Endothelial cell of umbilical vein (primary cell): ENCODE measurements at regions of chr1 and their contacts with region 1.

Region 1: DNA sequence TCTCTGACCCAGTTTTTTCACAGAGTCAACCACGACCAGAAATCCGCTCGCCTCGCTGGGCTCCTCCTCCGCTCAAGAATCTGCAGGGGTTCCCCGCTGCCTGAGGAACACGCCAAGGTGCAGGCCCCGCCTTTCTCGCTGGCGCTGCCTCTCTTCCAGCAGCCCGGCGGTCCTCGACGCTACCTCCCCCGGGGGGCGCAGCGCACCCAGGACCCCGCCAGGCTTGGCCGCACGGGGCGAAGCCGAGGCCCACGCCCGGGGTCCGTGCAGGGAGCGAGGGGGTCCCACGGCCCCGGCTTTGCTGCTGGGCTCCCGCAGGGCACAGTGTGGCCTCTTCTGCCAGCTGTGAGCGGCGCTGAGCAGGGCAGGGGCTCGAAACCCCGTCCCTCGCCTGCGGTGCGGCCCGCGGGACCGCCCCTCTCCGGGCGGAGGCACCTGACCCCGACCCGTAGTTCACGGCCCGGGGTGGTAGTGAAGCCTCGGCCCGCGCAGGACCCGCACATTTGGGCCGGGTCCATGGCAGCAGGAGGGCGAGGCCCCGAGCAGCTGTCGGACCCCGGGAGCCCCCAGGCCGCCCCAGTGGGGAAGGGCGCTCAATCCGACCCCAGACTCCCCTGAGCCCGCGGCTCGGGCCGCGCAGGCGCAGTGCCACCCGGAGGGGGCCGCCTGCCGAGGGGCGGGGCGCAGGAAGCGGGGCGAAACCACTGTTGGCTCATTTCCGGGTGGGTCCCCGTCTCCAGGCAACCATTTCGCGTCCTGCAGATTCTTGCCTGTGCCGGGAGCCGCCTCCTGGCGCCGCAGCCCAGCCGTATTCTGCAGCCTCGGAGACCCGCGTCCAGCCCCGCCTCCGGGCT is 10.0 kb upstream of the MMEL1 start:
- DNase-seq: peak; percentile 89
- H3K4me3 ChIP-seq: peak overlapping the region; percentile 55 to 87 (median 60)
- H3K27ac ChIP-seq: peak overlapping the region; percentile 79
- H3K4me1 ChIP-seq: peaks cover 8% of the 10 kb centered on the region
- H3K27me3 ChIP-seq: no peaks in the 10 kb centered on the region
- CTCF ChIP-seq: peak in 1 of 2 donors; percentile 21
- POLR2A ChIP-seq: peak; percentile 68

Region 2: DNA sequence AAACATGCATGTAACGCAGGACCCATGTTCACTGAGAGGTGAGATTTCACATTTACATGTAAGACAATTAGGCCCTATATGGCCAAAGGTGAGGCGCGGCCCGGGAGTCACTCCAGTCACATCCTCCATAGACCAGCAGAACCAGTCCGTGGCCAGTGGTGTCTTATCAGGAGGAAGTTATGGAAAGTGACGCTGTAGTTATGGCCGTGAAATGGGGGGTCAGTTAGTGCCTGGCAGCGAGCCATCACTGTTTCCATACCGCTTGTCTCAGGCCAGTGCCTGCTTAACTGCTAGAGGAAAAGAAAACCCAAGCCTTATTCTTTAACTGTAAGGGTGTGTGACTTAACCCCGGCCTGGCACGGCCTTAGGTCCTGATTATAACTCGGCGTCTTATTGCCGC is 1533.0 kb before region 1 on chr1:
- CTCF ChIA-PET with region 1: no interaction called
- POLR2A ChIA-PET with region 1: no interaction called
- dilution Hi-C with region 1: no loop called
- intact Hi-C with region 1: no loop called
- DNase-seq: peak; percentile 36
- H3K4me3 ChIP-seq: no peak overlapping the region
- H3K27ac ChIP-seq: no peak overlapping the region
- H3K4me1 ChIP-seq: no peaks in the 10 kb centered on the region
- H3K27me3 ChIP-seq: no peaks in the 10 kb centered on the region
- CTCF ChIP-seq: no peak
- POLR2A ChIP-seq: no peak

Region 3: GRCh38 chr1:2525920-2526823 is 116.6 kb before region 1 on chr1 and contains the start of gene PANK4:
- CTCF ChIA-PET with region 1: no interaction called
- POLR2A ChIA-PET with region 1: no interaction called
- dilution Hi-C with region 1: no loop called
- intact Hi-C with region 1: loop called (anchors 1 kb)
- DNase-seq: peak; percentile 84
- H3K4me3 ChIP-seq: peak within 1 kb of the TSS; percentile 75 to 97 (median 91)
- H3K27ac ChIP-seq: peak within 1 kb of the TSS; percentile 58
- H3K4me1 ChIP-seq: peaks cover 17% of the 10 kb centered on the region
- H3K27me3 ChIP-seq: peaks cover 10 to 17% of the 10 kb centered on the region in 2 experiments
- CTCF ChIP-seq: no peak
- POLR2A ChIP-seq: peak; percentile 82
- total RNA-seq, gene PANK4: 34.0 and 34.7 TPM in 2 replicates

Region 4: DNA sequence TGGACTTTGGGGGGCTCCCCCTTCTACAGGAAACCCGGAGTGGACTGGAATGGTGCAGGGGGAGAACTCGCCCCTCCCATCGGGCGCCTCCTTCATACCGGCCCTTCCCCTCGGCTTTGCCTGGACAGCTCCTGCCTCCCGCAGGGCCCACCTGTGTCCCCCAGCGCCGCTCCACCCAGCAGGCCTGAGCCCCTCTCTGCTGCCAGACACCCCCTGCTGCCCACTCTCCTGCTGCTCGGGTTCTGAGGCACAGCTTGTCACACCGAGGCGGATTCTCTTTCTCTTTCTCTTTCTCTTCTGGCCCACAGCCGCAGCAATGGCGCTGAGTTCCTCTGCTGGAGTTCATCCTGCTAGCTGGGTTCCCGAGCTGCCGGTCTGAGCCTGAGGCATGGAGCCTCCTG is 86.5 kb before region 1 on chr1 and contains the start of gene TNFRSF14:
- CTCF ChIA-PET with region 1: no interaction called
- POLR2A ChIA-PET with region 1: no interaction called
- dilution Hi-C with region 1: no loop called
- intact Hi-C with region 1: loop called (anchors 1 kb)
- DNase-seq: peak; percentile 65
- H3K4me3 ChIP-seq: peak within 1 kb of the TSS; percentile 15 to 38 (median 28)
- H3K27ac ChIP-seq: peak within 1 kb of the TSS; percentile 53
- H3K4me1 ChIP-seq: peaks cover 23% of the 10 kb centered on the region
- H3K27me3 ChIP-seq: no peaks in the 10 kb centered on the region
- CTCF ChIP-seq: peak in 1 of 2 donors; percentile 17
- POLR2A ChIP-seq: no peak
- total RNA-seq, gene TNFRSF14: 36.4 and 40.9 TPM in 2 replicates

Region 5: GRCh38 chr1:2580691-2581090 is 62.1 kb before region 1 on chr1:
- CTCF ChIA-PET with region 1: no interaction called
- POLR2A ChIA-PET with region 1: no interaction called
- dilution Hi-C with region 1: no loop called
- intact Hi-C with region 1: loop called (anchors 1 kb)
- DNase-seq: no peak
- H3K4me3 ChIP-seq: no peak overlapping the region
- H3K27ac ChIP-seq: peak overlapping the region; percentile 86
- H3K4me1 ChIP-seq: peaks cover 34% of the 10 kb centered on the region
- H3K27me3 ChIP-seq: no peaks in the 10 kb centered on the region
- CTCF ChIP-seq: no peak
- POLR2A ChIP-seq: no peak

Region 6: GRCh38 chr1:2586154-2587070 is 56.4 kb before region 1 on chr1 and contains the start of gene PRXL2B:
- CTCF ChIA-PET with region 1: no interaction called
- POLR2A ChIA-PET with region 1: no interaction called
- dilution Hi-C with region 1: no loop called
- intact Hi-C with region 1: loop called (anchors 1 kb)
- DNase-seq: peak; percentile 98
- H3K4me3 ChIP-seq: peak within 1 kb of the TSS; percentile 56 to 73 (median 61)
- H3K27ac ChIP-seq: peak within 1 kb of the TSS; percentile 75
- H3K4me1 ChIP-seq: peaks cover 15% of the 10 kb centered on the region
- H3K27me3 ChIP-seq: no peaks in the 10 kb centered on the region
- CTCF ChIP-seq: no peak
- POLR2A ChIP-seq: peak; percentile 33
- total RNA-seq, gene PRXL2B: 55.8 and 56.8 TPM in 2 replicates

Region 7: DNA sequence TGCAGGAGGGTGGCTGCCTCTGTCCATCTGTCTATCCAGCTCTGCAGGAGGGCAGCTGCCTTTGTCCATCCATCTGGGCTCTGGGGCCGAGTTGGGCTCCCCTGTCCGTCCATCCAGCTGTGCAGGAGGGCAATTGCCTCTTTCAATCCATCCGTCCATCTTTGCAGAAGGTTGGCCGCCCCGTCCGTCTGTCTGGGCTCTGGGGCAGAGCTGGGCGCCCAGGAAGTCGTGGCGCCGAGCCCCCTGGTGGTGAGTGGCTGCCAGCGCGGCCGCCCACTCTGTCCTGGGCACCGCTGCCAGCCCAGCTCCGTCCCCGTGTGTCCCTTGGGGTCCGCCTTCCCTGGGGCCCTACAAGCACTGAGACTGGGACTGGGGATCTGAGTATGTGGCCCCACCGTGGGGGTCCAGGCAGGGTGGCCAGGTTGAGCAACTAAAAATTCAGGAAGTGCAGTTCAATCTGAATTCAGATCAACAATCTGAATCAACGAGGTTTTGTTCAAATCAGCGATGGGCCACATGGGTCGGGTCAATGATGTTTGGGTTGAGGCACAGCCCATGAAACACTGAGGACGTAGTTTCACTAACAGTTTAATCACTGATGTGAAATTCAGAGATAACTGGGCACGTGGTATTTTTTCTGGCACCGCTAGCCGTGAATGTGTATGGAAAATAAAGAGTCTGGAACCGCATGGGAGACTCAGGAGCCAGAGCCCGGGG is 279.3 kb after region 1 on chr1:
- CTCF ChIA-PET with region 1: no interaction called
- POLR2A ChIA-PET with region 1: no interaction called
- dilution Hi-C with region 1: no loop called
- intact Hi-C with region 1: no loop called
- DNase-seq: no peak
- H3K4me3 ChIP-seq: no peak overlapping the region
- H3K27ac ChIP-seq: no peak overlapping the region
- H3K4me1 ChIP-seq: no peaks in the 10 kb centered on the region
- H3K27me3 ChIP-seq: no peaks in the 10 kb centered on the region
- CTCF ChIP-seq: no peak
- POLR2A ChIP-seq: no peak

Region 8: DNA sequence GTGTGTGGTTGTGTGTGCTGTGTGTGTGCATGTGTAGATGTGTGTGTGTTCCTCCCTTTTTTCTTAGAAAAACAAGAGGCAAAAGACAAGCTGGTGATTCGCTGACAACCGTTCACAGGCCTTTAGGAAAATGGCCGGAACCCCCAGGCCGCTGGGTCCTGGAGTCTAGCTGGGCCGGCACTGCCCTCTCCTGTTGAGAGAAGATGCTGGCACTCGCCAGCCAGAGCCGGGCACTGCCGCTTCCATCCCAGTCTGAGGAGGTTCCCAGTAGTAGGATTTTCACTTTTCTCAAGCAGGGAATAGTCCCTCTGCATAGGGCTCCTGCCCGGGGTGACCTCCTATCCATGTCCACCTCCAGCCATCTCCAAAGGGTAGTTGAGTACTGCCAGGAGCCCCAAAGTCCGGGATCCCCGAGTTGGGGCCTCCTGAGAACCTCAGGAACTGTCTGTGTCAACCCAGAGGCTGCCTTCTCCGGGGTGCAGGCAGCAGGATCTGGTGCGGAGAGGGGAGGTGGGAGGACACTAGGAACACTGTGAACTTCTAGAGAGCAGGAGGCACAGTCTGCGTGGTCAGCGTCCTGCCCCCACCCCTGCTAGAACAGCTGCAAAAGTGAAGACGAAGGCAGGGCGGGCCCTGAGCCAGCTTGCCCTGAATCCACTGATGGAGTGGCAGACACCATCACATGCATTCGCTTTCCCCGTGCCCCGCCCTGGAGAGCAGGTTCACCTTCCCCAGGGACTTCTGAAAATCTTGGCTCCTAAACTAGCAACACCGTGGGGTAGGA is 767.5 kb after region 1 on chr1:
- CTCF ChIA-PET with region 1: no interaction called
- POLR2A ChIA-PET with region 1: no interaction called
- dilution Hi-C with region 1: no loop called
- intact Hi-C with region 1: loop called (anchors 10 kb)
- DNase-seq: peak; percentile 30
- H3K4me3 ChIP-seq: no peak overlapping the region
- H3K27ac ChIP-seq: no peak overlapping the region
- H3K4me1 ChIP-seq: no peaks in the 10 kb centered on the region
- H3K27me3 ChIP-seq: no peaks in the 10 kb centered on the region
- CTCF ChIP-seq: peak; percentile 35 to 62
- POLR2A ChIP-seq: no peak